MCF 10A (cell line): ENCODE measurements at regions of chr7 and their contacts with region 1.

Region 1: DNA sequence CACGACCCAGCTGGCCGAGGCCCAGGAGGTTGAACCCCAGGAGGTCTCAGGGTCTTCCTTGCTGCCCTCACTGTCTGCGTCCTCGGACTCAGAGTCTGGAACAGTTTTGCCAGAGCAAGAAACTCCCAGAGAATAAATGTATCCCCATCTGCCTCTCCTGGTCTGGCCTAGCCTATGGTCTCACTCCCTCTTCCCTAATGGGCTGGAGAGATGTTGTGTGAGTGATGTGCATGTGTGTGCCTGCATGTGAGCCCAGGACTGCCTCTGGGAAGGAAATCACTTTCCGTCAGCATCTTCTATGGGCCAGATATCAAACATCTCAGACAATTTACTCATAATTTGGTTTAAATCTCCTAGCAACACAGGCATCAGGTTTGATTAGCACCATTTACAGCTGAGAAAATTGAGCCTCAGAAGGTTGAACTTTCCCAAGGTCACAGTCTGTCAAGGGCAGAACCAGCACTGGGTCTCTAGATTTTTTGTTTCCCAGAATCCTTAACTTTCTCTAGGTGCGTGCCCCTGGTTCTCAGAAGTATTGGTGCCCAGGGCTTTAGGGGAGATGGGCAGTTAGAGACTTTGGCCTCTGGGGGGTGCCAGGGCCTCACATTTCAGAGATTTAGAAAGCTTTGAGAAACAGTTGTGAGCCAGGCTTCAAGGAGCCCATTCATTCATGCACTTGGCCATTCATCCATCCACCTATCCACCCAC is 4.9 kb downstream of the TMEM270 start:
- DNase-seq: peak; percentile 68
- H3K4me3 Mint-ChIP-seq: no peak overlapping the region
- H3K27ac Mint-ChIP-seq: no peak overlapping the region
- H3K4me1 Mint-ChIP-seq: no peaks in the 10 kb centered on the region
- H3K27me3 Mint-ChIP-seq: no peaks in the 10 kb centered on the region
- CTCF ChIP-seq: peak; percentile 77

Region 2: DNA sequence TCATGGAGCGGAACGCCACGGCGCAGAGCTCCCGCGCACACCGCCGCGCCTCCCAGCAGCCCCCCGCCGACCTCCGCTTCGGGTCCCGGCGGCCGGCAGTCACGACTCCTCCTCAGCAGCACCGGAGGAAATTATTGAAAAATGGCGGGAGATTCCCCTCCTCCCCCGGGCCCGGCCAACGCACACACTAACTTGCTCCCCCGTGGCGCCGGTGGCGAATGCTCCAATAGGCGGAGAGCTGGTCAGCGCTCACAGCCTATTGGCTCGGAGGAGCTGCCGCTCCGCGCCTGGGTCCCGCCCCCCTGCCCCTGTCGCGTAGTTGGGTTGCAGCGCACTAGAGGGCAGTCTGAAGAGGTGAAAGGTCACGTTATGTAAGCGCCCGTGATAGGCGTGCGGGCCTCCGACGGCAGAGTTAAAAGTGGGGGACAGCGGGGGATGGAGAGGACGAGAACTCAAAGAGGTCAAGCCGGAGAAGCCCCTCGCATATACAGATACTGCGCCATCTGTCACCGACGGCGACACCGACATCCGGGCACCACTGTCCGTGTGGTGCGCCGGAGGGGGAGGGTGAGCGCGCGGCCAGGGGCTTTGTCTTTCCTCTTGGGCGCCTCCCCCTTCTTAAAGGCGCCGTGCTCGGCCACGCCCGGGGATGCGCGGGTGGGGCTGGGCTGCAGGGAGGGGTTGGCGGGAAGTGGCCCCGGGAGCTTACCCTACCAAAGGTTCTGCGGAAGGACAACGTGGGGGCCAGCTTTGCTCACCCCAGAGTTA is 343.6 kb before region 1 on chr7 and contains the start of gene BAZ1B:
- CTCF ChIA-PET with region 1: no interaction called
- POLR2A ChIA-PET with region 1: no interaction called
- intact Hi-C with region 1: no loop called
- DNase-seq: peak; percentile 98
- H3K4me3 Mint-ChIP-seq: peak within 1 kb of the TSS; percentile 91
- H3K27ac Mint-ChIP-seq: peak within 1 kb of the TSS; percentile 91
- H3K4me1 Mint-ChIP-seq: peaks cover 17% of the 10 kb centered on the region
- H3K27me3 Mint-ChIP-seq: no peaks in the 10 kb centered on the region
- CTCF ChIP-seq: peak; percentile 13
- total RNA-seq, gene BAZ1B: 84.0 and 86.7 TPM in 2 replicates

Region 3: DNA sequence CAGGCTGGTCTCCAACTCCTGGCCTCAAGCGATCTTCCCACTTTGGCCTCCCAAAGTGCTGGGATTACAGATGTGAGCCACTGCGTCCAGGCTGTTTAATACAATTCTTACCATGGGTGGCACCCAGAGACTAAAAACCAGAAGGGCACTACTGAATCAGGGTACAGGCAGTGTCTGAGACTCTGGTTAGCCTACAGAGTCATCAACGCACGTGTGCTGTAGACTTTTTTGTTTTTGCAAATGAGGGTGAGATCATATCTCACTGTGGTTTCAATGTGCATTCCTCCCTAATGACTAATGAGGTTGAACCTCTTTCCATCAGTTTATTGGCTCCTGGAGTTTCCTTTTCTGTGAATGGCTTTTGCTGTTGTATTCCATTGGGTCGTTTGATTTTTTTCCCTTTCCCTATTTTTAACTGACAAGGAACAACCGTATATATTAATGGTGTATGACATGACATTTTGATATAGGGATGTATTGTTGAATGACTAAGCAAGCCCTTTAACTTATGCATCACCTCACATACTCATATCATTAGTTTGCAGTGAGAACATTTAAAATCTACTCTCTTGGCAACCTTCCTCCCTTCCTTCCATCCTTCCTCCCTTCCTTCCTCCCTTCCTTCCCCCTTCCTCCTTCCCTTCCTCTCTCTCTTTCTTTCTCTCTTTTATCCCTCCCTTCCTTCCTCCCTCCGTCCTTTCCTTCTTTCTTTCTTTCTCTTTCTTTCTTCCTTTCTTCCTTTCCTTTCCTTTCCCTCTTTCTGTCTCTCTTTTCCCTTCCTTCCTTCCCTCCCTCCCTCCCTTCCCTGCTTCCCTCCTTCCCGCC is 14.3 kb before region 1 on chr7:
- CTCF ChIA-PET with region 1: no interaction called
- POLR2A ChIA-PET with region 1: no interaction called
- intact Hi-C with region 1: no loop called
- DNase-seq: peak; percentile 97
- H3K4me3 Mint-ChIP-seq: peak overlapping the region; percentile 43
- H3K27ac Mint-ChIP-seq: peak overlapping the region; percentile 94
- H3K4me1 Mint-ChIP-seq: peaks cover 39% of the 10 kb centered on the region
- H3K27me3 Mint-ChIP-seq: no peaks in the 10 kb centered on the region
- CTCF ChIP-seq: no peak

Region 4: DNA sequence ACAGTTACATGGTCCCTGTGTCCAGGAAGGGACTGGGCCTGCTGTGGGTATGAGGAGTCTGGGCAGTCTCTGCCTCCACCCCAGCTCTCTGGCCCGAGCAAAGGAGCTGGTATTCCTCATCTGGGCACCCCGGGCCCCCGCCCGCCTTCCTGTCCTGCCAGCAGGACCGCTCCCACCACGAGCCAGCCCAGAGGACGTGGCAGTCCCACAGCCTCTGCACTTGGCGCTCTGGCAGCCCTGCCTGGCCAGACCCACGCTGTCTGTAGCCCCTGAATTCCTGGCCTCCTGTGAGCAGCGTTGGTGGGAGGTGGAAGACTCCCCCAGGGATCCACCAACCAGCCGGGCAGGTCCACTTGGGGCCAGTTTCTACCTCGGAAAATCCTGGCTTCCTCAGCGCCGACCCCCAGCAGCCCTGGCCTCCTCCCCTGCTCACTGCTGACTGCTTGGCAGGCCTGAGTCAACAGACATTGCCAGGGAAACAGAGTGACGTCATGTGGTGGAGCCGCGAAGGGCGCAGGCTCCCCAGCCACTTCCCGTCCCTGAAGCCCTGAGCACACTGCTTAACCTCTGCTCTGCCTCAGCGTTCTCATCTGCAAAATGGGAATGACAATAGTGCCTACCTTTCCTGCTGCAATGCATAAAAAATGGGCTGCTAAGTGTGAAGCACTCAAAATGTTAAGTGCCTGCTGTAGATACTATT is 196.1 kb after region 1 on chr7:
- CTCF ChIA-PET with region 1: interaction called, 5 read pairs
- POLR2A ChIA-PET with region 1: no interaction called
- intact Hi-C with region 1: loop called (anchors 1 kb)
- DNase-seq: peak; percentile 80
- H3K4me3 Mint-ChIP-seq: peak overlapping the region; percentile 42
- H3K27ac Mint-ChIP-seq: peak overlapping the region; percentile 89
- H3K4me1 Mint-ChIP-seq: peaks cover 24% of the 10 kb centered on the region
- H3K27me3 Mint-ChIP-seq: peaks cover 14% of the 10 kb centered on the region
- CTCF ChIP-seq: no peak

Region 5: DNA sequence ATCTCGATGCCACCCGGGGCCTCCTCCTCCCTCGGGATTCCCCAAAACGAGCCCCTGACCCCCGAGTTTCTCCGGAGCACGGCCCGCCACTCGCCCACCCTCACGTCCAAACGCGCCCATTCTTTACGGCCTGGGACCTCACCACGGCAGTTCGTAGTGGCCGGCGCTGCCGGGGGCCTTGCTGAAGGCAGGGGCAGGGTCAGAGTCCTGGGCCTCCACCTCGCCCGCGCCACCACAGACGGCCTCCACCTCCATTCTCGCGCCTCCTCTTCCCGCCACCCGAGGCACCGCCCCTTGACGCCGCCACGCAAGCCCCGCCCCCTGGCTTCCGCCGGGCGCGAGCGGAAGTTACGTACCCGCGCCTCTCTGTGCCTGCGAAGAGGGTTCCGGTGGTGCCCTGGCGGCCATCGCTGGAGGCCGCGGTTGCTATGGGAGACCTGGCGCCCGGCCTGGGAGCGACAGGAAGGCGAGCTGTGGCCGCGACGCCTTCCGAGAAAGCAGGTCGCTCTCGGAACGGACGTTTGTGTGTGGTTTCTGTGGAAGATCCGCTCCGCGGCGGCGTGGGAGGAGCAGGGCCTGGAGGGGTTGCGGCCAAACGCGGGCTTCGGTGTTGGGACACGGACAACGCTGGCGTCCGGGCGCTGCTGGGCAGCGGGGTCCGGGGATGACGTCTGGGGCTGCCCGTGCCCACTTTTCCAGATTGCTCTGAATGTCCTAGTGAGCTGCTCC is 388.4 kb after region 1 on chr7 and contains the start of gene RFC2:
- CTCF ChIA-PET with region 1: no interaction called
- POLR2A ChIA-PET with region 1: no interaction called
- intact Hi-C with region 1: loop called (anchors 1 kb)
- DNase-seq: peak; percentile 93
- H3K4me3 Mint-ChIP-seq: peak within 1 kb of the TSS; percentile 97
- H3K27ac Mint-ChIP-seq: peak within 1 kb of the TSS; percentile 99
- H3K4me1 Mint-ChIP-seq: no peaks in the 10 kb centered on the region
- H3K27me3 Mint-ChIP-seq: no peaks in the 10 kb centered on the region
- CTCF ChIP-seq: no peak
- total RNA-seq, gene RFC2: 16.3 and 35.0 TPM in 2 replicates